MCF 10A (cell line): ENCODE measurements at regions of chr1 and their contacts with region 1.

Region 1: DNA sequence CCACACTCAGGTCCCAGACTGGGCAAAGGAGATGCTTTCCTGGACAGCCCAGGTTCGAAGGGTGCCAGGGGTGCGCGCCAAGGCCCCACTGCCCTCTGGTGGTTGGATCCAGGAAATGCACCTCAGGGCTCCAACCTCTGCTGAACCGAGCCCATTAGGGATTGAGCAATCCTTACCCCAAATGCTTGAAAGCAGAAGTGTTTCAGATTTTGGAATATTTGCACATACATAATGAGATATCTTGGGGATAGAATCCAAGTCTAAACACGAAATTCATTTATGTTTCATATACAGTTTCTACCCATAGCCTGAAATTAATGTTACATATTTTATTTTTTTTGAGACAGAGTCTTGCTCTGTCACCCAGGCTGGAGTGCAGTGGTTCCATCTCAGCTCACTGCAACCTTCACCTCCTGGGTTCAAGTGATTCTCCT is 57.4 kb downstream of the SLC9A1 start:
- DNase-seq: peak; percentile 86
- H3K4me3 Mint-ChIP-seq: no peak overlapping the region
- H3K27ac Mint-ChIP-seq: peak overlapping the region; percentile 43
- H3K4me1 Mint-ChIP-seq: peaks cover 24% of the 10 kb centered on the region
- H3K27me3 Mint-ChIP-seq: no peaks in the 10 kb centered on the region
- CTCF ChIP-seq: peak; percentile 94

Region 2: DNA sequence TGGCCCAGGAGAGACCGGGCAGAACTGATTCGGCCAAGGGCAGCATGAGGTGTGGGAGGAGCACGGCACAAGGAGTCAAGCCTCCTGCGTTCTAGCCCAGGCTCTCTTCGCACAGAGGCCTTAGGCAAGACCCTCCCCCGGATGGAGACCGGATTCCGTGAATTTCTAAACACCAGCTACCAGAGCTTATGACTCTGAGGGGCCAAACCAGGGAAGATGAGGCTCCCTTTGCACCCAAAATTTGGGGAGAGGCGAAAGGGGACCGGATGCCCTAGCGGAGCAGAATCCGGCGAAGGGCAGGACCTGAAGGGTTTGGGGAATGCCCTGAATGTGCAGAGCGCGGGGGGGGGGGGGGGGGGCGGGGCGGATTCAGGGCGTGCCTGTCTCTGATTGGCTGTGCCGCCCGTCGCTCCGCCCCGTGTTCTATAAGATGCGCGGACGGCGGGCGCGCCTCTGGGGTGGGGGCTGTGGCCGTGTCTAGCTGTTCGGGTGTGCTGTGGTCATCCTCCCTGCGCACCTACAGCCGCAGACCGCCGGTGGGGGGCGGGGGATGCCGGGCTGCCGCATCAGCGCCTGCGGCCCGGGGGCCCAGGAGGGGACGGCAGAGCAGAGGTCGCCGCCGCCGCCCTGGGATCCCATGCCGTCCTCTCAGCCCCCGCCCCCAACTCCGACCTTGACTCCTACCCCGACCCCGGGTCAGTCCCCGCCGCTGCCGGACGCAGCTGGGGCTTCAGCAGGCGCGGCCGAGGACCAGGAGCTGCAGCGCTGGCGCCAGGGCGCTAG is 104.1 kb before region 1 on chr1 and contains the start of gene TRNP1:
- CTCF ChIA-PET with region 1: interaction called, 73 read pairs
- POLR2A ChIA-PET with region 1: interaction called, 32 read pairs
- intact Hi-C with region 1: loop called (anchors 1 kb)
- DNase-seq: peak; percentile 81
- H3K4me3 Mint-ChIP-seq: peak within 1 kb of the TSS; percentile 80
- H3K27ac Mint-ChIP-seq: peak within 1 kb of the TSS; percentile 92
- H3K4me1 Mint-ChIP-seq: peaks cover 45% of the 10 kb centered on the region
- H3K27me3 Mint-ChIP-seq: no peaks in the 10 kb centered on the region
- CTCF ChIP-seq: no peak
- total RNA-seq, gene TRNP1: 56.3 and 59.2 TPM in 2 replicates

Region 3: DNA sequence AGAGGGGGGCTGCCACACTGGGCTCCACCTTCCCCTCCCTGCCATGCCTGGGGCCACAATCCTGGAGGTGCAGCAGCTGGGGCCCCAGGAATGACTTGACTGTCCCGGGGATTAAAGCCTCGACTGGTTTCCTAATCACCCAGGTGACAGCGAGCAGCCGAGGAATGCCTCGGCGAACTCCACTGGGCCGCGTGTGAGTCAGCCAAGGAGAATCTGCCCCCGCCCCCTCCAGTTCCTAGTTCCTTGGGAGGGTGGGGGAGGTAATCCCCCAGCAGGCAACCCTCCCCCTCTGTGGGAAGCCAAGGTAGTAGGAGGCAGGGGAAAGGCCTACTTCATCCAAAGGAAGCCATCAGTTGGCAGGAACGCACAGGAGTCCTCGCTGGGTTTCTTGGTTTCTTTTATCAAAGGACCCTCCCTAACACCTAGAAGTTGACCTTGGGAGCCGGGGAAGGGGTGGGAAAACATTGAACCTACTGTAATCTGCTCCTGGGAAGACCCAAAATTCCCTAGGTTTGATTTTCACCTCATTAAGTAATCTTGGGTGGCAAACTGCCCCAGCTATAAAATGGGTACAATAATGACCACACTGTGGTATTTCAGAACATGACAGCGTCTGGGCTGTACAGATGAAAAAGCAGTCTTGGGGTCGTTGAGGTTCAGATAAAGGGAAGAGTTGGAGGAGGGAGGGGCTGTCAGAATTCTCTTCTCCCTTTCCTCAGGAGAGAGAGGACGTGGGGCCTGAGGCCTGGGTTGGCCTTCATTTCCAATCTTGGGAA is 86.3 kb before region 1 on chr1:
- CTCF ChIA-PET with region 1: interaction called, 7 read pairs
- POLR2A ChIA-PET with region 1: interaction called, 19 read pairs
- intact Hi-C with region 1: no loop called
- DNase-seq: peak; percentile 95
- H3K4me3 Mint-ChIP-seq: peak overlapping the region; percentile 78
- H3K27ac Mint-ChIP-seq: peak overlapping the region; percentile 78
- H3K4me1 Mint-ChIP-seq: peaks cover 14% of the 10 kb centered on the region
- H3K27me3 Mint-ChIP-seq: no peaks in the 10 kb centered on the region
- CTCF ChIP-seq: no peak

Region 4: DNA sequence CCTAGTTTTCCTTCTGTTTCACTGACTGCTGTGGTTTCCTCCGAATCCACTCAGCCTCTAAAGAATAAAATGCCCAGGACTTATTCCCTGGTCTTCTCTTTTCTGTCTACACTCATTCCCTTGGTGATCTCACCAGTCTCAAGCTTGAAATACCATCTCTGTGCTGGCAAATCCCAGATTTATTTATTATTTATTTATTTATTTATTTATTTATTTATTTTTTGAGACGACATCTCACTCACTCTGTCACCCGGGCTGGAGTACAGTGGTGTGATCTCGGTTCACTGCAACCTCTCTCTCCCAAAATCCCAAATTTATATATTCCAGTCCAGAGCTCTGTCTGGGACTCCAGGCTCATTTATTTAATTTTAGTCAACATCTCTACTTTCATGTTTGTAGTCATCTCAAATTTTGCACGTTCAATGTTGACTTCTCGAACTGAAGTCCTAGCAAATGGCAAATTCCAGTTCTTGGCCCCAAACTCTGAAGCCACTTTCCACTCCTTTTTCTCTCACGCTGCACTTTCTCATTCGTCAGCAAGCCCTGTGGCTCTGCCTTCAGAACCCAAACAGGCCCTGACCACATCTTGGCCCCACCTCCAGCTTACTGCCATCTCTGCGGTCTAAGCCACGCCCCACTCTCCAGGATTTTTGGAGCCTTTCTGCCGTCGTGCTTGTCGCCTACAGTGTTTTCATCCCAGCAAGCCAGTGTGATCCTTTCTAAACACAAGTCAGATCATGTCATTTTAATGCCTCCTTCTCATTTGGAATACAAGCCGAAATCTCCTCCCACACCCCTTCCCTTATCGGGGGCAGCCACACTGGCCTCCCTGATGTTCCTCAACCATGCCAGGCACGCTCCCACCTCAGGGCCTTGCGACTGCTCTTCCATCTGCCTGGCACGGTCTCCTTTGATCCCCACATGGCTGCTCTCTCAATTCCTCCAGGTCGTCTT is 70.6 kb before region 1 on chr1:
- CTCF ChIA-PET with region 1: no interaction called
- POLR2A ChIA-PET with region 1: no interaction called
- intact Hi-C with region 1: no loop called
- DNase-seq: peak; percentile 60
- H3K4me3 Mint-ChIP-seq: no peak overlapping the region
- H3K27ac Mint-ChIP-seq: peak overlapping the region; percentile 4
- H3K4me1 Mint-ChIP-seq: peaks cover 12% of the 10 kb centered on the region
- H3K27me3 Mint-ChIP-seq: no peaks in the 10 kb centered on the region
- CTCF ChIP-seq: no peak

Region 5: DNA sequence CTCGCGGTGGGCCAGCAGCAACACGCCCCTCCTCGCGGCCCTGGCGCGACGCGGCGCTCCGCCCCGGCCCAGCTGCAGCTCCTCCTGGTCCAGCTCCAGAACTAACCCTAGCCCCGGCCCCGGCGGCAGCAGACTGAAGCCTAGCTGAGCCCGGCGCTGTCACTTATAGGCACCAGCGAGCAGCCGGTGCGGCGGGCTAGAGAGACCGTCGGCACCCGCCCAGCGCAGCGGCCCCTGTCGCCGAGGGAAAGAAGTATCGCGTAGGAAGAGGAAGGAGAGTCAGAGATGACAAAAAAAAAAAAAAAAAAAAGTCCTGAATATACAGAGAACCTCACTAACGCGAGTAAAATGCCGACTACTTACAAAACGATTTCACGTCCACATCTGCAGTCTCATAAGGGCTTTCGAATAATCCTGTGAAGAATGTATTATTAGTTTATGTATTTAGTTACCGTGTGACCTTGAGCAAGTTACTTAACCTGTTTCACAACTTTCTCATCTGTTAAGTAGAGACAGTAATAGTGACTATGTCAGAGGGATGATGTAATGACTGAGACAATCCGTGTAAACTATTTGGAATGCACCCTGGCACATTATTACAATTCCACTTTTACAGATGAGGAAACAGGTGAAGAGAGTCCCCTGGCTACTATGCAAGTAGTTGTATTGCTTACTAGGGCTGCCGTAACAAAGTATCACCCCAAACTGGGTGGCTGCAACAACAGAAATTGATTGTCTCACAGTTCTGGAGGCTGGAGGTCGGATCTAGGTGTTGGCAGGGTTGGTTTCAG is 57.7 kb after region 1 on chr1 and contains the start of gene SLC9A1:
- CTCF ChIA-PET with region 1: interaction called, 6 read pairs
- POLR2A ChIA-PET with region 1: interaction called, 14 read pairs
- intact Hi-C with region 1: no loop called
- DNase-seq: peak; percentile 90
- H3K4me3 Mint-ChIP-seq: peak within 1 kb of the TSS; percentile 92
- H3K27ac Mint-ChIP-seq: peak within 1 kb of the TSS; percentile 94
- H3K4me1 Mint-ChIP-seq: peaks cover 46% of the 10 kb centered on the region
- H3K27me3 Mint-ChIP-seq: no peaks in the 10 kb centered on the region
- CTCF ChIP-seq: peak; percentile 72
- total RNA-seq, gene SLC9A1: 70.5 and 88.8 TPM in 2 replicates

Region 6: GRCh38 chr1:27284425-27285273 is 187.1 kb after region 1 on chr1:
- CTCF ChIA-PET with region 1: interaction called, 67 read pairs
- POLR2A ChIA-PET with region 1: interaction called, 7 read pairs
- intact Hi-C with region 1: loop called (anchors 1 kb)
- DNase-seq: peak; percentile 83
- H3K4me3 Mint-ChIP-seq: no peak overlapping the region
- H3K27ac Mint-ChIP-seq: no peak overlapping the region
- H3K4me1 Mint-ChIP-seq: no peaks in the 10 kb centered on the region
- H3K27me3 Mint-ChIP-seq: no peaks in the 10 kb centered on the region
- CTCF ChIP-seq: peak; percentile 75